CD8-positive, alpha-beta T cell (primary cell): ENCODE measurements at regions of chr1 and their contacts with region 1.

Region 1: GRCh38 chr1:9004700-9005394 is 21.4 kb downstream of the SLC2A7 start:
- DNase-seq: peak; percentile 67 to 90 (median 82)
- ATAC-seq: peak; percentile 96
- H3K4me3 ChIP-seq: peak overlapping the region; percentile 7 to 48
- H3K4me3 Mint-ChIP-seq: peak overlapping the region; percentile 75
- H3K27ac ChIP-seq: no peak overlapping the region
- H3K27ac Mint-ChIP-seq: peak overlapping the region; percentile 66
- H3K4me1 ChIP-seq: peaks cover 16% of the 10 kb centered on the region
- H3K4me1 Mint-ChIP-seq: peaks cover 12% of the 10 kb centered on the region
- H3K27me3 ChIP-seq: no peaks in the 10 kb centered on the region
- H3K27me3 Mint-ChIP-seq: no peaks in the 10 kb centered on the region
- CTCF ChIP-seq: peak; percentile 97

Region 2: GRCh38 chr1:8671306-8671917 is 333.4 kb before region 1 on chr1:
- CTCF ChIA-PET with region 1: no interaction called
- POLR2A ChIA-PET with region 1: no interaction called
- intact Hi-C with region 1: no loop called
- DNase-seq: peak in 3 of 9 experiments; percentile 15 to 65 (median 50)
- ATAC-seq: no peak
- H3K4me3 ChIP-seq: no peak overlapping the region
- H3K4me3 Mint-ChIP-seq: no peak overlapping the region
- H3K27ac ChIP-seq: no peak overlapping the region
- H3K27ac Mint-ChIP-seq: no peak overlapping the region
- H3K4me1 ChIP-seq: peaks cover 21% of the 10 kb centered on the region
- H3K4me1 Mint-ChIP-seq: peaks cover 33% of the 10 kb centered on the region
- H3K27me3 ChIP-seq: no peaks in the 10 kb centered on the region
- H3K27me3 Mint-ChIP-seq: no peaks in the 10 kb centered on the region
- CTCF ChIP-seq: peak; percentile 70

Region 3: DNA sequence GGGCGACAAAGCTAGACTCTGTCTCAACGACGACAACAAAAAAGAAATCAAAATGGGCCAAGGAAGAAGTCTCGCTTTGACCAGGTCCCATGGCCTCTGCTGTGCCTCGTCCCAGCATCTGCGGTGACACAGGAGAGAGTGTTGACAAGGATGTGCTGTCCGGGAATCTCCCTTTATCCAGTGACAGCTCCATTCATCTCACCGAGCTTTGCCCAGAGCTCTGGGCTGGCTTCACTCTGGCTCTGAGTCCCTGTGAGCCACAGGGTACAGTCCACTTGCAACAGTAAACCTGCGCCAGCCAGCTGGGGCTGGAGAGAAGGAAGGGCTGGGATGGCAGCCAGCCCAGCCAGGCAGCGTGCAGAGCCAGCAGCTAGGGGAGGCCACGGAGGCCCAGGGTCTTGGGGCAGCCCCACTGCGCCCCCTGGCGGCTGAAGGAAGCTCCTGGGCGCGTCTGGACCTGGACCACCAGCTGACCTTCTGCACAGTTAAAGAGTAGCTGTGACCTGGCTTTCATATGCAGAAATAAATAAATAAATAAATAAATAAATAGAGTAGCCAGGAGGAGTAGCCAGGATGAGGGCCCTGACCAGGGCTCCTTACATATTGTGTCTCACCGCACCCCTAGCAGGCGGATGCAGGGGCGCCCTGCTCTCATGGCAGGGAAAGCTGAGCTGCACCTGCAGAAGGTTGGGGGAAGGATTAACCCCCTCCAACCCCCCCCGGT is 156.0 kb before region 1 on chr1:
- CTCF ChIA-PET with region 1: interaction called, 16 read pairs
- POLR2A ChIA-PET with region 1: interaction called, 5 read pairs
- intact Hi-C with region 1: no loop called
- DNase-seq: peak; percentile 51 to 86 (median 76)
- ATAC-seq: peak; percentile 92
- H3K4me3 ChIP-seq: no peak overlapping the region
- H3K4me3 Mint-ChIP-seq: no peak overlapping the region
- H3K27ac ChIP-seq: no peak overlapping the region
- H3K27ac Mint-ChIP-seq: no peak overlapping the region
- H3K4me1 ChIP-seq: peaks cover 3% of the 10 kb centered on the region
- H3K4me1 Mint-ChIP-seq: peaks cover 2% of the 10 kb centered on the region
- H3K27me3 ChIP-seq: no peaks in the 10 kb centered on the region
- H3K27me3 Mint-ChIP-seq: peaks cover 2% of the 10 kb centered on the region
- CTCF ChIP-seq: peak; percentile 82

Region 4: DNA sequence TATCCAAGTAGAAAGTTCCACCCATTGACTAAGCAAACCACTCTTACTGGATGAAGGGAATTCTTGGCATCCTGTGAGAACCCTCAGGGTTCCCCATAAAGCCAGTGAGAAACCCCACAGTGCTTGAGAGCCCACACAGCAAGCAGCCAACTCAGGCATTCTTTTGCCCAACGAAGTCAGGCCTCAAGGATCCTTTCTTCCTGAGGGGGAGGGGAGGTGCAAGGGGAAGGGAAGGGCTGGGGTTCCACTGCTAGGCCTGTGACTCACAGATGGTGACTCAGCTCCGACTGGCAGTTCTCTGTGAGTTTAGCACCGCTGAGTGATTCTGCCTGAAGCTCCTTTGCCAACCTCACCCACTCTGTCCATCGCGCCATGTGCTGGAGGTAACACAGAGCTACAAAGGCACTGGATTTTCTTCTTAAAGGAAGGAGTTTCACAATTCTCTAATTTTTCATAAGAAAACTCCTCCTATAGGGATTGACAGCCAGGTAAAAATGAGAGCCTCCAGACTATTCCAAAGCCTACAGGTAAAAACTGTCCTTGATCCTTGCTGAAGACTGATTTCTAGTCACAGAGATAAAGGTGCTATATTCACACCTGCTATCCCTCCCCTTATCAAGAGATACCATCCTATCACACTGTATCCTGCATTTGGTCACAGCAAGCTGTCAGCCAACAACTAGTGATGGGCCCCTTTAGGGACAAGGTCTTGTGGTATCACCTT is 131.2 kb before region 1 on chr1:
- CTCF ChIA-PET with region 1: interaction called, 194 read pairs
- POLR2A ChIA-PET with region 1: interaction called, 7 read pairs
- intact Hi-C with region 1: no loop called
- DNase-seq: peak in 8 of 9 experiments; percentile 60 to 82 (median 72)
- ATAC-seq: peak; percentile 30
- H3K4me3 ChIP-seq: no peak overlapping the region
- H3K4me3 Mint-ChIP-seq: peak overlapping the region; percentile 19
- H3K27ac ChIP-seq: peak overlapping the region in 1 of 2 experiments; percentile 99
- H3K27ac Mint-ChIP-seq: peak overlapping the region; percentile 78
- H3K4me1 ChIP-seq: peaks cover 48% of the 10 kb centered on the region
- H3K4me1 Mint-ChIP-seq: peaks cover 69% of the 10 kb centered on the region
- H3K27me3 ChIP-seq: no peaks in the 10 kb centered on the region
- H3K27me3 Mint-ChIP-seq: no peaks in the 10 kb centered on the region
- CTCF ChIP-seq: no peak

Region 5: GRCh38 chr1:8910914-8911313 is 93.9 kb before region 1 on chr1:
- CTCF ChIA-PET with region 1: interaction called, 121 read pairs
- POLR2A ChIA-PET with region 1: interaction called, 6 read pairs
- intact Hi-C with region 1: no loop called
- DNase-seq: no peak
- ATAC-seq: no peak
- H3K4me3 ChIP-seq: no peak overlapping the region
- H3K4me3 Mint-ChIP-seq: no peak overlapping the region
- H3K27ac ChIP-seq: no peak overlapping the region
- H3K27ac Mint-ChIP-seq: peak overlapping the region; percentile 78
- H3K4me1 ChIP-seq: peaks cover 32% of the 10 kb centered on the region
- H3K4me1 Mint-ChIP-seq: peaks cover 39% of the 10 kb centered on the region
- H3K27me3 ChIP-seq: peaks cover 0 to 2% of the 10 kb centered on the region in 2 experiments
- H3K27me3 Mint-ChIP-seq: no peaks in the 10 kb centered on the region
- CTCF ChIP-seq: no peak

Region 6: GRCh38 chr1:8962812-8963530 is 41.9 kb before region 1 on chr1:
- CTCF ChIA-PET with region 1: interaction called, 23 read pairs
- POLR2A ChIA-PET with region 1: interaction called, 9 read pairs
- intact Hi-C with region 1: no loop called
- DNase-seq: peak in 8 of 9 experiments; percentile 30 to 66 (median 46)
- ATAC-seq: peak; percentile 42
- H3K4me3 ChIP-seq: peak overlapping the region in 1 of 2 experiments; percentile 31
- H3K4me3 Mint-ChIP-seq: peak overlapping the region; percentile 64
- H3K27ac ChIP-seq: peak overlapping the region in 1 of 2 experiments; percentile 35
- H3K27ac Mint-ChIP-seq: peak overlapping the region; percentile 80
- H3K4me1 ChIP-seq: peaks cover 74% of the 10 kb centered on the region
- H3K4me1 Mint-ChIP-seq: peaks cover 73% of the 10 kb centered on the region
- H3K27me3 ChIP-seq: no peaks in the 10 kb centered on the region
- H3K27me3 Mint-ChIP-seq: no peaks in the 10 kb centered on the region
- CTCF ChIP-seq: peak; percentile 31

Region 7: GRCh38 chr1:8976896-8977450 is 27.9 kb before region 1 on chr1:
- CTCF ChIA-PET with region 1: interaction called, 15 read pairs
- POLR2A ChIA-PET with region 1: no interaction called
- intact Hi-C with region 1: no loop called
- DNase-seq: no peak
- ATAC-seq: no peak
- H3K4me3 ChIP-seq: no peak overlapping the region
- H3K4me3 Mint-ChIP-seq: no peak overlapping the region
- H3K27ac ChIP-seq: no peak overlapping the region
- H3K27ac Mint-ChIP-seq: no peak overlapping the region
- H3K4me1 ChIP-seq: peaks cover 4% of the 10 kb centered on the region
- H3K4me1 Mint-ChIP-seq: peaks cover 10% of the 10 kb centered on the region
- H3K27me3 ChIP-seq: no peaks in the 10 kb centered on the region
- H3K27me3 Mint-ChIP-seq: no peaks in the 10 kb centered on the region
- CTCF ChIP-seq: no peak

Region 8: GRCh38 chr1:8992936-8993687 is 11.7 kb before region 1 on chr1:
- CTCF ChIA-PET with region 1: interaction called, 113 read pairs
- POLR2A ChIA-PET with region 1: no interaction called
- intact Hi-C with region 1: loop called in 1 of 2 experiments (anchors 1 kb)
- DNase-seq: no peak
- ATAC-seq: no peak
- H3K4me3 ChIP-seq: no peak overlapping the region
- H3K4me3 Mint-ChIP-seq: no peak overlapping the region
- H3K27ac ChIP-seq: no peak overlapping the region
- H3K27ac Mint-ChIP-seq: no peak overlapping the region
- H3K4me1 ChIP-seq: peaks cover 7% of the 10 kb centered on the region
- H3K4me1 Mint-ChIP-seq: peaks cover under 1% of the 10 kb centered on the region
- H3K27me3 ChIP-seq: no peaks in the 10 kb centered on the region
- H3K27me3 Mint-ChIP-seq: no peaks in the 10 kb centered on the region
- CTCF ChIP-seq: no peak

Region 9: DNA sequence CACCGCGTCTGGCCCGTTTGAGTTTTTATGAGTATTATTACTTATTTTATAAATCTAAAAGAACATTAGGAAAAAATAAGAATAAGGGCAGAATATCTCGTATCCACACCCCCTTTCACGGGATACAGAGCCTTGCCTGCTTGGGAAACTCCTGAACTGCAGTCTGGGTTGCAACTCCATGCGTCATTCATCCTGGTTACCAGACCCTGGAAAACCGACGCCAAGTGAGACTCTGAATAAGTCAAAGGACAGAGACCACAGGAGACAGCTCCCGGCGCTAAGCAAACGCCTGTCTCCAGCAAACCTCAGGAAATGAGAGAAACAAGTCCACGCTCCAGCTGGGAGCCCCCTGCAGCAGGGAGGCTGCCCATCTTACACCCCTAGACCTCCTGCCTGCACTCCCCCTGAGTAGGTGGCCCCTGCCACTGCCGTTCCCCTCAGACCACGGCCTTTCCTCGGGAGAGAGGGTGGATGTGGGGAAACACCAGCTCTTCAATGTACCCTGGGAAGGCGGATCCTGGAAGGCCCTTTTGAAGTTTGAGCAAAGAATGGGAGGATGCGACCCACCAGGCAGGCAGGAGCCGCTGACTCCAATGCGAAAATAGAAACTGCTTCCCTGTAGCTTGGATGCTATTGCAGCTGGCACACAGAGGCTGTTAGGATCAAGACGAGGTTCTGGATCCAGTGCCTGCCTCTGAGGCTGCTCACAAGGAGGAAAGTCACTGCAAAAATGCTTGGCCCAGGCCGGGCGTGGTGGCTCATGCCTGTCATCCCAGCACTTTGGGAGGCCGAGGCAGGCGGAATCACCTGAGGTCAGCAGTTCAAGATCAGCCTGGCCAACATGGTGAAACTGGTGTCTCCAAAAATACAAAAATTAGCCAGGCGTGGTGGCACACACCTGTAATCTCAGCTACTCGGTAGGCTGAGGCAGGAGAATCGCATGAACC is 161.7 kb after region 1 on chr1:
- CTCF ChIA-PET with region 1: no interaction called
- POLR2A ChIA-PET with region 1: no interaction called
- intact Hi-C with region 1: no loop called
- DNase-seq: no peak
- ATAC-seq: no peak
- H3K4me3 ChIP-seq: no peak overlapping the region
- H3K4me3 Mint-ChIP-seq: no peak overlapping the region
- H3K27ac ChIP-seq: no peak overlapping the region
- H3K27ac Mint-ChIP-seq: no peak overlapping the region
- H3K4me1 ChIP-seq: no peaks in the 10 kb centered on the region
- H3K4me1 Mint-ChIP-seq: no peaks in the 10 kb centered on the region
- H3K27me3 ChIP-seq: no peaks in the 10 kb centered on the region
- H3K27me3 Mint-ChIP-seq: peaks cover 5% of the 10 kb centered on the region
- CTCF ChIP-seq: no peak